Activated CD8-positive, alpha-beta T cell treated with anti-CD3 and anti-CD28 coated beads for 36 hours (primary cell): ENCODE measurements at regions of chrX and their contacts with region 1.

Region 1: GRCh38 chrX:134753718-134754008 is 95.4 kb upstream of the PLAC1 start:
- DNase-seq: no peak
- ATAC-seq: no peak
- H3K4me3 Mint-ChIP-seq: no peak overlapping the region
- H3K27ac Mint-ChIP-seq: no peak overlapping the region
- H3K4me1 Mint-ChIP-seq: no peaks in the 10 kb centered on the region
- H3K27me3 Mint-ChIP-seq: peaks cover 3% of the 10 kb centered on the region
- CTCF ChIP-seq: no peak

Region 2: DNA sequence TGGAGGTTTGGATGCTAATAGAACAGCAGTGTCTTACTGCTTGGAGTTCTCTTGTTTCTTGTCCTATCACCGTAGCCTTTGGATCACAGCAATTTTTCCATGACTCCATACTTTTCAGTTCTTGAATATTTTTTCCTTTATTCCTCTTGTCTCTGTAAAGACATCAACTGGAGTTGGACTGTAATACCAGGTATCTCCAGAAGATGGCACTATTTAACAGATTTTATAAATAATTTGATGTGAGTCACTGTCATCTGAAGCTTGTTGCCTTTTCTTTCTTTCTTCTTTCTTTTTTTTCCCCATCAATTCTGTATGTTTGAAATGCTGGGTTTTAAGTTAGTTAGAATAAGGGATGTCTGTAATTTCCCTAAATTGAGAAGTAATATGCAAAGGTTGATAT is 269.6 kb before region 1 on chrX:
- CTCF ChIA-PET with region 1: no interaction called
- POLR2A ChIA-PET with region 1: no interaction called
- intact Hi-C with region 1: no loop called
- DNase-seq: no peak
- ATAC-seq: no peak
- H3K4me3 Mint-ChIP-seq: no peak overlapping the region
- H3K27ac Mint-ChIP-seq: no peak overlapping the region
- H3K4me1 Mint-ChIP-seq: no peaks in the 10 kb centered on the region
- H3K27me3 Mint-ChIP-seq: no peaks in the 10 kb centered on the region
- CTCF ChIP-seq: peak; percentile 35

Region 3: GRCh38 chrX:134520860-134521390 is 232.7 kb before region 1 on chrX:
- CTCF ChIA-PET with region 1: no interaction called
- POLR2A ChIA-PET with region 1: no interaction called
- intact Hi-C with region 1: loop called (anchors 10 kb)
- DNase-seq: no peak
- ATAC-seq: no peak
- H3K4me3 Mint-ChIP-seq: no peak overlapping the region
- H3K27ac Mint-ChIP-seq: no peak overlapping the region
- H3K4me1 Mint-ChIP-seq: peaks cover 6% of the 10 kb centered on the region
- H3K27me3 Mint-ChIP-seq: no peaks in the 10 kb centered on the region
- CTCF ChIP-seq: no peak